ENCODE measurements at regions of chrX and their contacts with region 1.

Region 1: DNA sequence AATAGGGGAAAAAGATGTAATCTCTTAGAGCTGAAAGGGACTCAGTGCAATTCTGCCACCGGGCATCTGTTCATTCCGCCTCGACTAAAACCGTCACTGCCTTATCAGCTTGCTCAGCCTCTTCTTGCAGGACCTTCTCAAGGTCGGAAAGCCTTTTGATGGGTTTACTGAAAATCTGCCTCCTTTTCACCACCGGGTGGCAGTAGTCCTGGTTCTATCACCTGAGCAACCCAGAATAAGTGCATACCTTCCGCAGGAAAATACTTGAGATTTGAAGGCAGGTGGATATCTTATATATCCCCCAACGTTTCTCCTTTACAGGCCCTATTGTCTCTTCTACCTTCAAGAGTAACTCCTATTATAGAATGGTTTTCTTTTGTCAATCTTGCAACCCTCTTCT is 103.4 kb upstream of the PAK3 start:
- DNase-seq: no peak
- H3K4me3 Mint-ChIP-seq: no peak overlapping the region
- H3K27ac Mint-ChIP-seq: no peak overlapping the region
- H3K4me1 Mint-ChIP-seq: no peaks in the 10 kb centered on the region
- H3K27me3 Mint-ChIP-seq: peaks cover 7% of the 10 kb centered on the region

Region 2: DNA sequence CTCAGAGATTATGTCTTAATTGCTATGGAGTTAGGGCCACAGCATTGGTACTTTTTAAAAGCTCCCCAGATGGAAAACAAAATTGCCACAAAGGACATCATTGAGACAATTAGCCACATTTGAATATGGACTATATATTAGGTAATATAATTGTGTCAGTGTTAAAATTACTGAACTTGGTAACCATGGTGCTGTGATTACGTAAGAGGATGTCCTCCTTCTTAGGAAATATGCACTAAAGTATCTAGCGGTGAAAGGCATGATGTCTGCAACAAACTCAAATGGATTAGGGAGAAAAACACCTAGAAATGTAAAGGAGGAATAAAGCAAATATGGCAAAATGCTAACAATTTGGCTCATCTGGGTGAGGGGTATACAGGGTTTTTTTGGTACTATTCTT is 13.5 kb after region 1 on chrX:
- intact Hi-C with region 1: no loop called
- DNase-seq: no peak
- H3K4me3 Mint-ChIP-seq: no peak overlapping the region
- H3K27ac Mint-ChIP-seq: no peak overlapping the region
- H3K4me1 Mint-ChIP-seq: no peaks in the 10 kb centered on the region
- H3K27me3 Mint-ChIP-seq: no peaks in the 10 kb centered on the region

Region 3: GRCh38 chrX:111445486-111445885 is 452.9 kb after region 1 on chrX:
- intact Hi-C with region 1: loop called (anchors 5 kb)
- DNase-seq: no peak
- H3K4me3 Mint-ChIP-seq: no peak overlapping the region
- H3K27ac Mint-ChIP-seq: no peak overlapping the region
- H3K4me1 Mint-ChIP-seq: no peaks in the 10 kb centered on the region
- H3K27me3 Mint-ChIP-seq: no peaks in the 10 kb centered on the region